GM23248 (cell line): ENCODE measurements at regions of chr15 and their contacts with region 1.

Region 1: DNA sequence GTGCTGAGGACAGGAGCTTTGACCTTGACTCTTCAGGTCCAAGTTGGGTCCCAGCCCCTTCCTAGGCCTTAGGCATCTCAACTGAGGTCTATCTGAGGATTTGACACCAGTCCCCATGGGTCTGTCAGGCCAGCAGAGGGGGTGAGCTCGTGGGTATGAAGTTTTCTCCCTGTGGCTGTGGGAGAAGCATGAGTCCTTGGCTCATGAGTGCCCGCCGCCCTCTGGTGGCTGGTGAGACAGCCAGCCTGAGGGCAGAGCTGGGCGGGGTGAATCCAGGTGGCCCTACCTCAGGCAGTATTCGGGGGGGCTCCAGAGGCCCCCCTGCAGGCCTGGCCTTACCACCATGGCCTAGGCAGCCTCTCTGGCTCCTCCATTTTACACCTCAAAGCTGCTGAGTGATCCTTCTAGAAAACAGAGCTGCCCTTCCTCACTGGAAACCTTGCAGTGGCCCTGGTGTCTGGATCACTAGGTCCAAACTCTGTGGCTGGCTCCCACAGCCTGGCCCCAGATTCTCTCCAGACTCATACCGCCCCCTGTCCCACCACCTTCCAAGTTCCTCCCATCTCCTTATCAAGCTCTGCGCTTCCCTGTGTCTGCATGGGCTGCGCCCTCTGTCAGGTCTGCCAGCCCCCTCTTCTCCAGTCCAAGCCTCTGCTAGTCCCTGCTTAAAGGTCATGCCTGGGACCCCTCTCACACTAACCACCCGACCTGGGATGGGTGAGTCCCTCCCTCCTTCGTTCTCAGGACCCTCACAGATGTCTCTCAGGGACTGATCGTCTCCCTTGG is 16.1 kb downstream of the SH2D7 start:
- DNase-seq: peak; percentile 94
- H3K4me3 ChIP-seq: no peak overlapping the region
- H3K27ac ChIP-seq: no peak overlapping the region
- H3K4me1 ChIP-seq: no peaks in the 10 kb centered on the region
- H3K27me3 ChIP-seq: no peaks in the 10 kb centered on the region

Region 2: DNA sequence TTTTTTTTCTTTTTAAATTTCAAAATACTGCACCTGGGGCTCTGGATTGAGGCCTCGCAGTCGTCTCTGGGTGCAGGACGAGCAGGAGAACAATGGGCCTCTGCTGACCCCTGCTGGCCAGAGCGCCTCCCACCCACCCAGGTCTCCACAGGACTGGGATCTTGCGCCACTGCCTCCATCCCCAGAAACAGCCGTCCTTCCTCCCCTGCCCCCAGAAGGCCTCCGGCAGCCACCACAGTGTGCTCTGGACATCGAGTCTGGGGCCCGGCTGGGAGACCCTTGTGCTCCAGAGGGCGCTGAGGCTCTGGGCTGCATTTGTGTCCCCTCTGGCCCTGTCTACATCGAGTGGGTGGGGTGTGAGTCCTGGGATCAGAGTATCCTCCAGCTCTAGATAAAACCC is 132.5 kb after region 1 on chr15:
- in situ Hi-C with region 1: loop called (anchors 5 kb)
- DNase-seq: peak; percentile 79
- H3K4me3 ChIP-seq: no peak overlapping the region
- H3K27ac ChIP-seq: no peak overlapping the region
- H3K4me1 ChIP-seq: no peaks in the 10 kb centered on the region
- H3K27me3 ChIP-seq: peaks cover 12% of the 10 kb centered on the region

Region 3: GRCh38 chr15:78299101-78299930 is 190.8 kb after region 1 on chr15 and contains the start of gene SKIC8:
- in situ Hi-C with region 1: no loop called
- DNase-seq: peak; percentile 95
- H3K4me3 ChIP-seq: peak within 1 kb of the TSS; percentile 93
- H3K27ac ChIP-seq: peak within 1 kb of the TSS; percentile 75
- H3K4me1 ChIP-seq: peaks cover 36% of the 10 kb centered on the region
- H3K27me3 ChIP-seq: no peaks in the 10 kb centered on the region
- total RNA-seq, gene SKIC8: 52.6 and 60.1 TPM in 2 replicates